Activated CD4-positive, alpha-beta memory T cell treated with anti-CD3 and anti-CD28 coated beads, Interleukin-2, amount 10 ng/mL, durations not matched to agents 7 days and 5 days (primary cell): ENCODE measurements at regions of chr15 and their contacts with region 1.

Region 1: DNA sequence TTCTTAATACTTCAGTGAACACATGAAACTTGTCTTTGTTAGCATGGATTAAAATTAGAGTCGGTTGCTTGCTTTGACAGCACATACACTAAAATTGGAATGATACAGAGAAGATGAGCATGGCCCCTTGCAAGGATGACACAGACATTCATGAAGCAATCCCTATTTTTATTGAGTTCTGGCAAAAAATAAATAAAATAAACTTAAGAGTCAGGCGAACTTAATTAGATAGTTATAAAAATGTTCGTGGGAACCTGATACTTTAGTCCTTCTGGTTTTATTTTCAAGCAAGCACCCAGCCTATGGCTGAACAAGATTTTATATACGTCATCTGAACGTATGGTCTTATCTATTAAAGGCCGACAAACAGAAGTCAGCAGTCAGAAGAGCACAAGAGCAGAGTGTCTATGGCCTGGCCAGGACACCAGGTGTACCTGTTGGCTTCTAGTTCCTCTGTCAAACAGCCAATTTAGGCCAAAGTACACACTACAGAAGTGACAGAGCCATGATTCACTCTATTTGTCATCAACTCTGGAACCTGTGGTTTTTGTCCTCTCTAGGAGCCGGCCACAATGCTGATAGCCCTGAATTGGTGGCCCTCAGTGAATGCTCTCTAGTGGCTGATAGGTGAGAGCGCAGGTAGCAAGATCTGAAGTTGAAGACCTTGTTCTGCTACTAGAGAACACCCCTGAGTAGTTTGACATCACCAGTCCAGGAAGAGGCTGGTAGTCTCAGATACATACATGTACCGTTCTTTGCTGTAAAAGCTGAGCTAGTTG is 64.3 kb downstream of the LEO1 start:
- DNase-seq: no peak
- H3K4me3 Mint-ChIP-seq: no peak overlapping the region
- H3K27ac Mint-ChIP-seq: no peak overlapping the region
- H3K4me1 Mint-ChIP-seq: no peaks in the 10 kb centered on the region
- H3K27me3 Mint-ChIP-seq: no peaks in the 10 kb centered on the region

Region 2: GRCh38 chr15:51878446-51879386 is 28.6 kb before region 1 on chr15:
- CTCF ChIA-PET with region 1: interaction called, 14 read pairs
- POLR2A ChIA-PET with region 1: no interaction called
- DNase-seq: no peak
- H3K4me3 Mint-ChIP-seq: no peak overlapping the region
- H3K27ac Mint-ChIP-seq: no peak overlapping the region
- H3K4me1 Mint-ChIP-seq: peaks cover 6% of the 10 kb centered on the region
- H3K27me3 Mint-ChIP-seq: no peaks in the 10 kb centered on the region

Region 3: GRCh38 chr15:51888593-51889195 is 18.6 kb before region 1 on chr15:
- CTCF ChIA-PET with region 1: interaction called, 14 read pairs
- POLR2A ChIA-PET with region 1: no interaction called
- DNase-seq: no peak
- H3K4me3 Mint-ChIP-seq: no peak overlapping the region
- H3K27ac Mint-ChIP-seq: no peak overlapping the region
- H3K4me1 Mint-ChIP-seq: peaks cover 2% of the 10 kb centered on the region
- H3K27me3 Mint-ChIP-seq: no peaks in the 10 kb centered on the region

Region 4: DNA sequence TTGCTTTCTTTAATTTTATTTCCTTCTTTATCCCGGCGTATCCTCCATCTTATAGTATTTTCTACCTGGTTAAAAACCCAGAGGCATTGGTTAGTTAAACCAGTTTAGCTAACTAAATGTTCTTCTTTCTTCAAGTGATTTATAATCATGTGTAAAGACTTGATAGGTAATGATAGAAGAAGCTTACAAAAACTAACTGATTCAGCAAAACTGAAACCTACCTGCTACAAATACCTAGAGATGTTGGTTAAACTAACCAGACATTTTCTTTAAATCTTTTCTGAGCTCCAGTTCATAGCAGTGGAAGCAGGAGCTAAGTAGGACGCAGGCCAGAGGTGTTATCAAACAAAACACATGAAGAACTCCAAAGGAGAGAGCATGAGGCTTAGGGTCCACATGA is 19.5 kb after region 1 on chr15:
- CTCF ChIA-PET with region 1: no interaction called
- POLR2A ChIA-PET with region 1: no interaction called
- DNase-seq: no peak
- H3K4me3 Mint-ChIP-seq: no peak overlapping the region
- H3K27ac Mint-ChIP-seq: no peak overlapping the region
- H3K4me1 Mint-ChIP-seq: no peaks in the 10 kb centered on the region
- H3K27me3 Mint-ChIP-seq: no peaks in the 10 kb centered on the region

Region 5: GRCh38 chr15:51992976-51993375 is 85.7 kb after region 1 on chr15:
- CTCF ChIA-PET with region 1: no interaction called
- POLR2A ChIA-PET with region 1: no interaction called
- DNase-seq: no peak
- H3K4me3 Mint-ChIP-seq: no peak overlapping the region
- H3K27ac Mint-ChIP-seq: no peak overlapping the region
- H3K4me1 Mint-ChIP-seq: no peaks in the 10 kb centered on the region
- H3K27me3 Mint-ChIP-seq: no peaks in the 10 kb centered on the region

Region 6: DNA sequence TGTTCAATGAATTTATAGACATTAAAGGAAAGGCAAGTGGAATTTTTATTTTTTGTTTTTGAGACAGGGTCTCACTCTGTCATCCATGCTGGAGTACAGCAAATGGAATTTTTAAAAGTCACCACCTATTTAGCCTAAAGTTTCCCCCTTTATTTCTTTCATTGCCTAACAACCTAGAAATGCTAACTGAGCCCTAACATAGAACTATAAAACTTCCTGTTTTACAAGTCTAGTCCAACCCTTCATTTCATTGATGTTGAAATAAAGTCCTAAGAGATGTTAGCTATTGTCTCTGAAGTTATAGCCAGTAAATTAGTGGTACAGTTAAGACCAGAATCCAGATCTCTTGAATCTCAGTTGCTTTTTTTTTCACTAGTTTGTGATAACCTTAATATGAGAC is 150.7 kb after region 1 on chr15:
- CTCF ChIA-PET with region 1: no interaction called
- POLR2A ChIA-PET with region 1: no interaction called
- DNase-seq: no peak
- H3K4me3 Mint-ChIP-seq: no peak overlapping the region
- H3K27ac Mint-ChIP-seq: no peak overlapping the region
- H3K4me1 Mint-ChIP-seq: peaks cover 2% of the 10 kb centered on the region
- H3K27me3 Mint-ChIP-seq: no peaks in the 10 kb centered on the region